ENCODE measurements at regions of chr12 and their contacts with region 1.

Region 1: DNA sequence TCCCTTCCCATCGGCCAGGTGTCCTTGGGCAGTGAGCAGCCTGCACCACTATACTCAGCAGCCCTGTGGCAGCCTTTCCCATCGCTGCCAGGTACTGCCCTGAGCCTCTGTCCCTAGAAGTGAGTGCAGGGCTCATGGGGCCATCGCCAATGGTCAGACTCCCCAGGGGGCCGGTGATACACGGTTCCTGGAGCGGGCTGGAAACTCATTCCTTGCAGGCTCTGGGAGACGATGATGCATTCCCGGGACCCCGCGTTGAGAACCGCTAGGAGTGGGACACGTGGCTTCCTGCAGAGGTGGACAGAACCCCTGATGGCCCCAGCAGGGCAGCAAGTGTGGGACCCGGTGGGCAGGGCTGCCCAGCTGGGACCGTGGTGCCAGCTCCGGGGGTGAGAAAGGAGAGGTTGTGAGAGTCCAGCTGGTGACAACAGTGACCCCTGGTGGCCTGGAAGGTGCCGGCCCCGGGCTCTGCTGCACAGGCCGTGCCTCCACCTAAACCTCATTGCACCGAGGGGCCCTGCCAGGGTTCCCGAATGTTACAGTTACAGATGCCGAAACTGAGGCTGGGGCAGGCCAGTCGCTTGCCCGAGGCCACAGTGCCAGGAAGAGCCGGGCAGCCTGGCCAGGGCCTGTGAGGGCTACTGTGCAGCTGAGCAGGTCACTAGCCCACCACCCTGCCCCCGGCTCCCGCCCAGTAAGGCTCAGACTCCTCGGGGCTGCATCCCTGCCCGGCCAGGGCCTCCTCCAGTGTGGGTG is 33.8 kb downstream of the FBRSL1 start:
- DNase-seq: peak; percentile 90
- CTCF ChIP-seq: peak; percentile 74

Region 2: DNA sequence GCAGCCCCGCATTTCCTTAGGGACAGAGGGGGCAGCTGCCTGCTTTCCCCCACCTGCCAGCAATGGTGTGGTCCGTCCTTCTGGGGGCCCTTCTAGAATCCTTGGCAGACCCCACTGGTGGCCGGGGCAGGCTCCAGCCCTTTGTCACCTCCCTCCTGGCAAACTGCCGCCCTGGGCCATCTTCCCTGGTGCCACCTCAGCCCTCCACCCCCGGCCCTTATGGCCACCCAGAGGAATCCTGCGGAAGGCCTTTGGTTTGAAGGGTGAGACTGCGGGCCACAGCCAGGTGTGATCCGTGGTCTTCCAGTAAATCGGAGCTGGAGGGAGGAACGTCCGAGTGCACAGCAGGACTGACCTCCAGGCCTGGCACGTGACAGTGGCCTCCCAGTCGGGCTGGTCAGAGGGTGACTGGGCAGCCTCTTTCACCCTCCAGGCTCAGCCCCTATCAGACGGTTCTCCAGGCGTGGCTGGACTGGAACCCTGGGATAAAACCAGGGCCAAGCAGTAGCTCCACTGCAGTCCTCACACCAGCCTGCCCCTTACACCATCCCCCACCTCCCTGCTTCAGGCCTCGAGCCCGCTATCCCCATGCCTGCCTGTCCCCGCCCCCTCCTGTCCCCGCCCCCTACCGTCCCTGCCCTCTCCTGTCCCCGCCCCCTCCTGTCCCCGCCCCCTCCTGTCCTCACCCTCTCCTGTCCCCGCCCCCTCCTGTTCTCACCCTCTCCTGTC is 21.4 kb before region 1 on chr12:
- CTCF ChIA-PET with region 1: interaction called, 11 read pairs
- POLR2A ChIA-PET with region 1: no interaction called
- DNase-seq: no peak
- CTCF ChIP-seq: no peak

Measured in GM10248 (cell line).